ENCODE measurements at regions of chr7 and their contacts with region 1.

Region 1: DNA sequence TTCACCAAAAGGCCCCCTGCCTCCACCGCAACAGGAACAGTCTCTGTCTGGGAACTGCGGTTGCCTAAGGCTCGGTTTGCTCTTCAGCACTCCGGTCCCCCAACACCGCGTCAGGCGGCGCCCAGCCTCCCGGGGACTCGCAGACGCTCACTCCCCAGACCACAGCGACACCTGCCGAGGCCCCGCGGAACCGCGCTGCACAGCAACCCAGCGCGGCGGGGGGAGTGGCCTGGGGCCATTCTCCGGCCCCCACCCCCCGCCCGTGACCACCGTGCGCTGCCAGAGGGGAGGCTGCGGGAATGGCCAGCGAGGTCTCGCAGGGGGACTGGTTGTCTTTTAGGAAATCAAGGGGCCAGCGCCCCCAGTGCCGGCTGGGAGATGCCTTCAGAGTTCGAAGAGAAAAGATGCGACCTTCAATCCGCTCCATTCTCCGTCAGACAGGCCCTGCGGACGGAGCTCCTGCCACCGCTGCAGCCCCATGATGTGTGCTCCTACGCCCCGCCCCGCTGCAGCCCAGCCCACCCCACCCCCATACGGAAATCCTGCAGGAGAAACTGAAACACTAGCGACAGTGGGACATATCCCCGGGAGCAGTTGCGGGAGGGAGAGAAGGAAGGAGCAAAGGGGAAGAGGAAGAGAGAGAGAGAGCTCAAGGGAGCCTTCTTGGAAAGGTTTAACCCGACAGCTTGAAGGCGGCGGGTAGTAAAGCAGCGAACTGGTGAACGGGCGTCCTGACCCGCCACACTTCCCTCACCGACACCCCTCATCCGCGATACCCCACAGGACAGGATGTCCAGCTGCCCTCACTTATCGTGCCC is 137.4 kb upstream of the CDCA7L start:
- DNase-seq: peak; percentile 87
- H3K4me3 Mint-ChIP-seq: peak overlapping the region; percentile 67
- H3K27ac Mint-ChIP-seq: no peak overlapping the region
- H3K4me1 Mint-ChIP-seq: peaks cover 9% of the 10 kb centered on the region
- H3K27me3 Mint-ChIP-seq: peaks cover 37% of the 10 kb centered on the region

Region 2: GRCh38 chr7:21945454-21946227 is 137.5 kb before region 1 on chr7 and contains the start of gene CDCA7L:
- CTCF ChIA-PET with region 1: interaction called, 4 read pairs
- POLR2A ChIA-PET with region 1: no interaction called
- intact Hi-C with region 1: loop called (anchors 10 kb)
- DNase-seq: peak; percentile 81
- H3K4me3 Mint-ChIP-seq: peak within 1 kb of the TSS; percentile 87
- H3K27ac Mint-ChIP-seq: peak within 1 kb of the TSS; percentile 73
- H3K4me1 Mint-ChIP-seq: peaks cover 54% of the 10 kb centered on the region
- H3K27me3 Mint-ChIP-seq: peaks cover 7% of the 10 kb centered on the region
- total RNA-seq, gene CDCA7L: 62.5 to 70.4 TPM

Region 3: GRCh38 chr7:22016507-22016906 is 66.6 kb before region 1 on chr7:
- CTCF ChIA-PET with region 1: no interaction called
- POLR2A ChIA-PET with region 1: no interaction called
- intact Hi-C with region 1: no loop called
- DNase-seq: no peak
- H3K4me3 Mint-ChIP-seq: no peak overlapping the region
- H3K27ac Mint-ChIP-seq: no peak overlapping the region
- H3K4me1 Mint-ChIP-seq: no peaks in the 10 kb centered on the region
- H3K27me3 Mint-ChIP-seq: no peaks in the 10 kb centered on the region

Region 4: GRCh38 chr7:22094413-22095342 is 11.6 kb after region 1 on chr7:
- CTCF ChIA-PET with region 1: interaction called, 13 read pairs
- POLR2A ChIA-PET with region 1: no interaction called
- intact Hi-C with region 1: no loop called
- DNase-seq: no peak
- H3K4me3 Mint-ChIP-seq: no peak overlapping the region
- H3K27ac Mint-ChIP-seq: no peak overlapping the region
- H3K4me1 Mint-ChIP-seq: no peaks in the 10 kb centered on the region
- H3K27me3 Mint-ChIP-seq: peaks cover 6% of the 10 kb centered on the region